Activated T-helper 1 cell treated with anti-CD3 and anti-CD28 coated beads, Interleukin-12 subunit alpha, Interleukin-12 subunit beta, Interleukin-2, Interleukin-4 antibody, amounts not matched to agents 30 ng/mL and 10 ng/mL and 1 ng/mL, durations not matched to agents 14 hours and 24 hours and 36 hours (primary cell): ENCODE measurements at regions of chr1 and their contacts with region 1.

Region 1: DNA sequence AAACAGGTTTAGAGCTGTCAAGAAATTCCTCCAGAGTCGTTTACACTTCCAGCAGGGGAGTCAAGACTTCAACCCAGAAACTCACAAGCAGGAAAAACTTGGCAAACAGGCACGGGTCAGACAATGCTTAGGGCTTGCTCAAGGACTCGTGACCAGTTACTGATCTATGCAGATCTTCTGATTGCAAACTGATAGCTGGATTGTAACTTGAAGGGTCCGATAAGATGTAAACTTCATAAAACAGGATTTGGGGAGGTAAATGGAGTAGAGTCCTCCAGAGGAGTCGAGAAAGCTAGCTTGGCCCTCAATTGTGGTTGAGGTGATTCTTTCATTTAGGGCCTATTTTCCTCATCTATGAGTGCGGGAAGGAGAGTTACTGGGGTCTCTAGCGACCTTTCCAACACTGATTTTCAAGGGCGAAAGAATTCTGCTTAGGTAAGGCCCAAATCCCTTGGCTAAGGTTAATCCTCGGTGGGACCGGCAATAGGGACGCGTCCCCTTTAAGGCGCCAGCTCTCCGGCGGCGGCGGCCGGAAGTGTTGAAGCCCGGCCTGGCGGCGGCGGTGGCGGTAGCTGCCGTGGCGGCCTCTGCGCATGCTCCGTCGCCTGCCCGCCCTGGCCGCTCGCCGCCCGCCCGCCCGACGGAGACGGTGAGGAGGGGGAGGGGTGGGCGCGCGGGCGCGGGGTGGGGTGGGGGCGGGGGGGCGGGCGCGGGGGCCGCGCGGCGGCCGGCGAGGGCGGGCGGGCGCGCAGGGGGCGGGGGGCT is at the start of gene GMEB1:
- DNase-seq: peak; percentile 87
- H3K4me3 Mint-ChIP-seq: peak within 1 kb of the TSS; percentile 90
- H3K27ac Mint-ChIP-seq: peak within 1 kb of the TSS; percentile 98
- H3K4me1 Mint-ChIP-seq: peaks cover 11% of the 10 kb centered on the region
- H3K27me3 Mint-ChIP-seq: no peaks in the 10 kb centered on the region
- total RNA-seq, gene GMEB1: 27.2 and 30.3 TPM in 2 replicates

Region 2: DNA sequence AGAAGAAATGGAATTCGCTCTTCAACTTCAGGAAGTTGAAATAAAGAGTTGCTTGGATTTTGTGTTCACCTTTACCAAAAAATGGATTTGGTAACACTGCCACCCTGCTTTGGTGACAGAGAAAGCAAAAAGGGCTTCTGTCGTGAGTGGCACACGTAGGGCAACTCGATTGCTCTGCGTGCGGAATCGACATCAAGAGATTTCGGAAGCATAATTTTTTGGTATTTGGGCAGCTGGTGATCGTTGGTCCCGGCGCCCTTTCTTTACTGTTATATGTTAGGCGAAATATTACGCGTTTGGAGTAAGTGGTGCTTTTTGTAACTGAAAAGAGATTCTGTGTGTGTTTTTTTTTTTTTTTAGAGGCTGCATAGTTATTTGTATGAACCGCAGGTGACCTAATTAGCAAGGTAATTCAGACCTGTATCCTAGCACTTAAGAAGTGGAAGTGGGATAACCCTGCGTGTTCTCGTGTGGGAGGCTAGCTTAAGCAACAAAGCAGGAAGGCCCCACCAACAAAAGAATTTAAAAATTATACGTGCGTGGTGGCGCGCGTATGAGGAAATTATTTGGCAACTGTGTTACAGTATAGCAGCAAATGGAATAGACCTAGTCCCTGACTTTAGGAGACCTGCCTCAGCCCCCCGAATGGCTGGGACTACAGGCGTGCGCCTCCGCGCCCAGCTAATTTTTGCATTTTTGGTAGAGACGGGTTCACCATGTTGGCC is 19.7 kb before region 1 on chr1 and contains the start of gene RNU11:
- intact Hi-C with region 1: loop called (anchors 1 kb)
- DNase-seq: peak; percentile 86
- H3K4me3 Mint-ChIP-seq: peak within 1 kb of the TSS; percentile 92
- H3K27ac Mint-ChIP-seq: peak within 1 kb of the TSS; percentile 100
- H3K4me1 Mint-ChIP-seq: peaks cover 31% of the 10 kb centered on the region
- H3K27me3 Mint-ChIP-seq: peaks cover 2% of the 10 kb centered on the region
- total RNA-seq, gene RNU11: not detected in 2 replicates